OCI-LY7 (cell line): ENCODE measurements at regions of chr3 and their contacts with region 1.

Region 1: GRCh38 chr3:62873761-62874647 is 1.2 kb downstream of the CADPS start:
- DNase-seq: peak; percentile 92
- H3K4me3 ChIP-seq: peak overlapping the region; percentile 91
- H3K27ac ChIP-seq: peak overlapping the region; percentile 84
- H3K4me1 ChIP-seq: peaks cover 36% of the 10 kb centered on the region
- CTCF ChIP-seq: peak; percentile 69

Region 2: GRCh38 chr3:61783993-61784718 is 1089.8 kb before region 1 on chr3:
- CTCF ChIA-PET with region 1: no interaction called
- POLR2A ChIA-PET with region 1: no interaction called
- intact Hi-C with region 1: no loop called
- DNase-seq: no peak
- H3K4me3 ChIP-seq: no peak overlapping the region
- H3K27ac ChIP-seq: no peak overlapping the region
- H3K4me1 ChIP-seq: no peaks in the 10 kb centered on the region
- CTCF ChIP-seq: no peak

Region 3: GRCh38 chr3:62500556-62501288 is 373.3 kb before region 1 on chr3:
- CTCF ChIA-PET with region 1: interaction called, 3 read pairs
- POLR2A ChIA-PET with region 1: no interaction called
- intact Hi-C with region 1: loop called (anchors 2 kb)
- DNase-seq: peak; percentile 10
- H3K4me3 ChIP-seq: no peak overlapping the region
- H3K27ac ChIP-seq: no peak overlapping the region
- H3K4me1 ChIP-seq: peaks cover 50% of the 10 kb centered on the region
- CTCF ChIP-seq: no peak

Region 4: DNA sequence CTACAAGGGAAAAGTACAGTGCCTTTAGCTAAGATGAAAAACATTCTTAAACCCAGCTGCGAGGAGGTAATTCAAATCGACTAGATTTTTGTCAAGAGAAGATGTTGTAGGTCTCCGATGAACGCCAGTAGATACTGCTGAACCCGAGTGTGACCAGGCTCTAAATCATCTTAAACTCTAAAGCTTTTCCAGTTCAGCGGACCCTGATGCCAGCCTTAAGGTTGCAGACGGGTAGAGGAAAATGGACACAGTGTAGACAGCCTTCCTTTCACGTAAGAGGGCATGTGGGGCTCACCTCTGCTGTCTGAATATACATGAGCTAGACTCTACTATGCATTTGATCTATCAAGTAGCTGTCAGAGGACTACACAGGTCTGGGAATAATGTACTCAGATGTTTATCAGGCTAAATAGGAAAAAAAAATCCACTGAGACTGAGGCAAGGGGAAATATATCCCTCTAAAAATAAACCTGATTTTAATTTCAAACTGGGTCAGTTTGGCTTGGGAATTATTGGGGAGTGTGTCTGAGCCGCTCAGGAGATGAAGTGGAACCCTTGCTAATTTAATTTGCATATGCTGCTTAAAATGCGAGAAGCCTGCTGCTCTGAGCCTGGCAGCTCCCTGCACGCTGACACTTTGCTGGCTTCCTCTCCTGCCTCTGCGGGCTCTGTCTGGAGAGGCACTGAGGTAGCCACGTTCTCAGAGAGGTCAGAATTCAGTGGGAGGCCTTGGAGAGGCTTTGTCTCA is 150.7 kb before region 1 on chr3:
- CTCF ChIA-PET with region 1: no interaction called
- POLR2A ChIA-PET with region 1: interaction called, 6 read pairs
- intact Hi-C with region 1: loop called (anchors 1 kb)
- DNase-seq: peak; percentile 82
- H3K4me3 ChIP-seq: peak overlapping the region; percentile 58
- H3K27ac ChIP-seq: peak overlapping the region; percentile 85
- H3K4me1 ChIP-seq: peaks cover 73% of the 10 kb centered on the region
- CTCF ChIP-seq: no peak

Region 5: GRCh38 chr3:62803276-62803675 is 70.7 kb before region 1 on chr3:
- CTCF ChIA-PET with region 1: interaction called, 4 read pairs
- POLR2A ChIA-PET with region 1: interaction called, 23 read pairs
- intact Hi-C with region 1: loop called (anchors 2 kb)
- DNase-seq: peak; percentile 80
- H3K4me3 ChIP-seq: no peak overlapping the region
- H3K27ac ChIP-seq: peak overlapping the region; percentile 75
- H3K4me1 ChIP-seq: peaks cover 95% of the 10 kb centered on the region
- CTCF ChIP-seq: peak; percentile 82

Region 6: GRCh38 chr3:62823461-62824050 is 50.4 kb before region 1 on chr3:
- CTCF ChIA-PET with region 1: interaction called, 7 read pairs
- POLR2A ChIA-PET with region 1: interaction called, 62 read pairs
- intact Hi-C with region 1: loop called (anchors 1 kb)
- DNase-seq: peak; percentile 84
- H3K4me3 ChIP-seq: peak overlapping the region; percentile 65
- H3K27ac ChIP-seq: peak overlapping the region; percentile 85
- H3K4me1 ChIP-seq: peaks cover 96% of the 10 kb centered on the region
- CTCF ChIP-seq: no peak

Region 7: GRCh38 chr3:62859203-62859791 is 14.7 kb before region 1 on chr3:
- CTCF ChIA-PET with region 1: no interaction called
- POLR2A ChIA-PET with region 1: interaction called, 28 read pairs
- intact Hi-C with region 1: no loop called
- DNase-seq: no peak
- H3K4me3 ChIP-seq: no peak overlapping the region
- H3K27ac ChIP-seq: no peak overlapping the region
- H3K4me1 ChIP-seq: peaks cover 19% of the 10 kb centered on the region
- CTCF ChIP-seq: no peak

Region 8: DNA sequence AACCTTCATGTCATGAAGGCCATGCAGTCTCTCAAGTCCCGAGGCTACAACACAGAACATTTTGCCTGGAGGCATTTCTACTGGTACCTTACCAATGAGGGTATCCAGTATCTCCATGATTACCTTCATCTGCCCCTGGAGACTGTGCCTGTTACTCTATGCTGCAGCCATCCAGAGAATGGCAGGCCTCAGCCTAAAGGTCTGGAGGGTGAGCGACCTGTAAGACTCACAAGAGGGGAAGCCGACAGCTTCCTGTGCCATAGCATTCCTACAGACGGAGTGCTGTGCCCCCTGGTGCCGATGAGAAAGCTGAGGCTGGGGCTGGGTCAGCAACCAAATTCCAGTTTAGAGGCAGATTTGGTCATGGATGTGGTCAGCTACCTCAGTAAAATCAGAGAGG is 52.5 kb after region 1 on chr3:
- CTCF ChIA-PET with region 1: no interaction called
- POLR2A ChIA-PET with region 1: no interaction called
- intact Hi-C with region 1: no loop called
- DNase-seq: no peak
- H3K4me3 ChIP-seq: no peak overlapping the region
- H3K27ac ChIP-seq: no peak overlapping the region
- H3K4me1 ChIP-seq: no peaks in the 10 kb centered on the region
- CTCF ChIP-seq: no peak

Region 9: GRCh38 chr3:62939707-62940106 is 65.7 kb after region 1 on chr3:
- CTCF ChIA-PET with region 1: no interaction called
- POLR2A ChIA-PET with region 1: no interaction called
- intact Hi-C with region 1: no loop called
- DNase-seq: no peak
- H3K4me3 ChIP-seq: no peak overlapping the region
- H3K27ac ChIP-seq: no peak overlapping the region
- H3K4me1 ChIP-seq: no peaks in the 10 kb centered on the region
- CTCF ChIP-seq: no peak

Region 10: GRCh38 chr3:63193629-63194028 is 319.6 kb after region 1 on chr3:
- CTCF ChIA-PET with region 1: no interaction called
- POLR2A ChIA-PET with region 1: no interaction called
- intact Hi-C with region 1: loop called (anchors 1 kb)
- DNase-seq: peak; percentile 61
- H3K4me3 ChIP-seq: no peak overlapping the region
- H3K27ac ChIP-seq: no peak overlapping the region
- H3K4me1 ChIP-seq: no peaks in the 10 kb centered on the region
- CTCF ChIP-seq: peak; percentile 91